Left colon (tissue), 2 donors: ENCODE measurements at regions of chr9 and their contacts with region 1.

Region 1: DNA sequence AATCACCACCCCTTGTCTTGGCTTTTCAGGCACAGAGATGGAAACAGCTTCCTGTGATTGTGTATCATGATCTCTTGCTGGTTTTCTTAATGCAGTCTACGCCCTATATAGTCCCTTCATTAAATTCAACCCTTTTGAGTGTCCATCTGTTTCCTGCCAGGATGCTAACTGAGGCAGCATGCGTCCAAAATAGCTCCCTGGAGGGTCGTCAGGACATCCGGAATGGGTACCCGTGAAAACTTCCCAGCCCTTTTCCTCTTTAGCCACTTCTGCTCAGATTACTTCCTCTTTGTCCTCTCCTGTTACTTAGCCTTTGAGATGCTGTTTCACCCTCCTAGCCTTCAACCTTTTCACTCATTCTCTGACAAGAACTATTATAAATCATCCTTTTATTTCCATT is 79.8 kb upstream of the KLF9 start:
- DNase-seq: no peak
- ATAC-seq: no peak

Region 2: GRCh38 chr9:70587201-70587600 is 93.0 kb after region 1 on chr9:
- intact Hi-C with region 1: loop called in 1 of 2 experiments (anchors 10 kb)
- DNase-seq: no peak
- ATAC-seq: no peak